HepG2 (cell line): ENCODE measurements at regions of chr2 and their contacts with region 1.

Region 1: DNA sequence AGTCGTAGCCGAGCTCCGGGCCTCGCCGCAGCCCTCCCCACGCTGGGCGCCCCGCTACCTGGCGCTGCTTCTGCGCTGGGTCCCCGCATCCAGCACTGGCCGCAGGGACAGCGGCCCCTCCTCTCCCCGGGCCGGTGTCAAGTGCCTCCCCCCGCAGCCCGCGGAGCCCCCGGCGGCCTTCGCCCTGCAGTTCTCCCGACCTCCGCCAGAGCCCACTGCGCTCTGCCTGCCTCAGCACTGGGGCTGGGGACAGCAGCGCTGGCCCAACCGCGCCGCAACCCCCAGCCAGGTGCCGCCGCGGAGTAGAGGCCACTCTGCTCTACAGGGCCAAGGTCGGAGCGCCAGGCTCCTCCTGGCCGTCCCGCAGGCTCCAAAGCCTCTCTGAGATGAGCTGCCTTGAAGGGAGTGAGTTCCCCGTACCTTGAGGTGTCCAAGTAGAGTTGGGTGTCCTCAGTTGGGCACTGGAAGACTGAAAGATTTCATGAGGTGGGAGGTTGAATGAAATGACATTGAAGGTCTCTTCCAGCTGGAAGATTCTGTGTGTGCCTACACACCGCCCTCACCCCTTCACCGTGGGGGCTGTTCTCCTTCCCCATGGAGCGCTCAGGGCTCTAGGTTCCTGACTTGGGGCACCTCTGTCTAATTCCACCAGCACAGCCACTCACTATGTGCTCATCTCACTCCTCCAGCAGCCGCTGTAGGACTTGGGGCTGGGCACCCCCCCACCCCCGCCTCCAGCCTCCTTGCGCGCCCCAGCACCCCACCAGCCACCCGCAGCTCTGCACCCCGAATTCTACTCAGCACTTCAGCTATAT is 854 bp upstream of the DNMT3A start:
- DNase-seq: peak; percentile 78
- ATAC-seq: peak; percentile 91
- H3K4me3 ChIP-seq: peak overlapping the region; percentile 64 to 81 (median 71); a peak in 5 of 6 replicates
- H3K27ac ChIP-seq: no peak overlapping the region
- H3K4me1 ChIP-seq: peaks cover 26% of the 10 kb centered on the region
- H3K27me3 ChIP-seq: peaks cover 0 to 27% of the 10 kb centered on the region in 2 experiments; a peak in 2 of 5 replicates
- CTCF ChIP-seq: peak; percentile 96
- EP300 ChIP-seq: peak in 1 of 2 experiments; percentile 12; a peak in 1 of 4 replicates
- POLR2A ChIP-seq: no peak
- RAD21 ChIP-seq: peak; percentile 98

Region 2: GRCh38 chr2:25521665-25522387 is 179.2 kb after region 1 on chr2:
- CTCF ChIA-PET with region 1: interaction called, 9 read pairs
- POLR2A ChIA-PET with region 1: no interaction called
- in situ Hi-C with region 1: no loop called
- intact Hi-C with region 1: loop called (anchors 1 kb)
- DNase-seq: peak; percentile 72
- ATAC-seq: peak; percentile 86
- H3K4me3 ChIP-seq: no peak overlapping the region
- H3K27ac ChIP-seq: no peak overlapping the region
- H3K4me1 ChIP-seq: peaks cover 7% of the 10 kb centered on the region
- H3K27me3 ChIP-seq: no peaks in the 10 kb centered on the region
- CTCF ChIP-seq: peak; percentile 85
- EP300 ChIP-seq: no peak
- POLR2A ChIP-seq: no peak
- RAD21 ChIP-seq: peak; percentile 73